GM12878 (cell line): ENCODE measurements at regions of chr4 and their contacts with region 1.

Region 1: GRCh38 chr4:30461218-30461617 is 259.0 kb upstream of the PCDH7 start:
- DNase-seq: peak; percentile 19
- ATAC-seq: peak; percentile 90
- H3K4me3 ChIP-seq: no peak overlapping the region
- H3K27ac ChIP-seq: peak overlapping the region; percentile 66
- H3K4me1 ChIP-seq: peaks cover 16% of the 10 kb centered on the region
- H3K27me3 ChIP-seq: no peaks in the 10 kb centered on the region
- CTCF ChIP-seq: no peak
- EP300 ChIP-seq: peak in 1 of 2 experiments; percentile 44; a peak in 1 of 4 replicates
- POLR2A ChIP-seq: no peak
- RAD21 ChIP-seq: peak; percentile 42; the same call in 1 of the 2 replicates

Region 2: DNA sequence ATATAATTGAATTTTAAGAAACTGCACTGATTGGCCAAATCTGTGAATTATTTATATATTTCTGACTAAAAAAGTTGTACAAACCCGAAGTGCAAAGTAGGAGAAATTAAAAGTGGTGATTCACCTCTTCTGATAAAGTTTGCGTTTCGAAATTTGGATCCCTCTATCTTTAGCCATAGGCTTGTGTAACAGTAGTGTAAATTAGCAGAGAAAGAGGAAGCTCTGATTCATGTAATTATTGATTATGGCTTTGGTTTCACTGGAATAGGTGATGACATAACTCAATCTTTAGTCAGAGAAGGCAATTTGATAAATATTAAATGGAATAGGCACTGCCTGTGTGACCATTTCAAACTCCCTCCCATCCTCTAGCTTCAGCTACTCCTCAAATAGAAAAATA is 458.9 kb before region 1 on chr4:
- CTCF ChIA-PET with region 1: no interaction called
- POLR2A ChIA-PET with region 1: no interaction called
- RAD21 ChIA-PET with region 1: no interaction called
- SMC1A ChIA-PET with region 1: no interaction called
- in situ Hi-C with region 1: no loop called
- intact Hi-C with region 1: no loop called
- DNase-seq: no peak
- ATAC-seq: no peak
- H3K4me3 ChIP-seq: no peak overlapping the region
- H3K27ac ChIP-seq: no peak overlapping the region
- H3K4me1 ChIP-seq: no peaks in the 10 kb centered on the region
- H3K27me3 ChIP-seq: no peaks in the 10 kb centered on the region
- CTCF ChIP-seq: no peak
- EP300 ChIP-seq: no peak
- POLR2A ChIP-seq: no peak
- RAD21 ChIP-seq: no peak

Region 3: GRCh38 chr4:30413915-30414314 is 47.3 kb before region 1 on chr4:
- CTCF ChIA-PET with region 1: no interaction called
- POLR2A ChIA-PET with region 1: no interaction called
- RAD21 ChIA-PET with region 1: no interaction called
- SMC1A ChIA-PET with region 1: no interaction called
- in situ Hi-C with region 1: no loop called
- intact Hi-C with region 1: no loop called
- DNase-seq: no peak
- ATAC-seq: no peak
- H3K4me3 ChIP-seq: no peak overlapping the region
- H3K27ac ChIP-seq: no peak overlapping the region
- H3K4me1 ChIP-seq: no peaks in the 10 kb centered on the region
- H3K27me3 ChIP-seq: no peaks in the 10 kb centered on the region
- CTCF ChIP-seq: no peak
- EP300 ChIP-seq: no peak
- POLR2A ChIP-seq: no peak
- RAD21 ChIP-seq: no peak

Region 4: DNA sequence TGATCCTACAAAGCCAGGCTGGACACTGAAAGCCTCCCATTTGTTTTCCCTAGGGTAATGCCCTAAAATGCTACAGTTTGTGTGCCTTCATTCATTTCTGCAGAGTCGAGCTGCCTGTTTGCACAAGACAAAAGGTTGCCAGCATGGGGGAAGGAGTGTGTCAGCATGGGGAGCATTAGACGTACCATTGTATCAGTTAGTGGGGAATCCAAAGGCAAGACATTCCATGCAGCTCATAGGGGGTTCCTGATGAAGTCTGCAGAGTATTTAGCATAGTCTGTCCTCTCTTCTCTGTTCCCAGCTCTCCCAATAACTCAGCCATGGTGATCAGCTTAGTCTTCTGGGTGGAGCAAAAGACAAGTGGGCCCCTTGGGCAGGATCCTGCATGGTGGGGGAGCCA is 17.9 kb before region 1 on chr4:
- CTCF ChIA-PET with region 1: interaction called, 5 read pairs
- POLR2A ChIA-PET with region 1: no interaction called
- RAD21 ChIA-PET with region 1: no interaction called
- SMC1A ChIA-PET with region 1: interaction called, 10 read pairs
- in situ Hi-C with region 1: no loop called
- intact Hi-C with region 1: no loop called
- DNase-seq: no peak
- ATAC-seq: no peak
- H3K4me3 ChIP-seq: no peak overlapping the region
- H3K27ac ChIP-seq: no peak overlapping the region
- H3K4me1 ChIP-seq: no peaks in the 10 kb centered on the region
- H3K27me3 ChIP-seq: no peaks in the 10 kb centered on the region
- CTCF ChIP-seq: no peak
- EP300 ChIP-seq: no peak
- POLR2A ChIP-seq: no peak
- RAD21 ChIP-seq: no peak

Region 5: GRCh38 chr4:30511751-30512150 is 50.5 kb after region 1 on chr4:
- CTCF ChIA-PET with region 1: no interaction called
- POLR2A ChIA-PET with region 1: no interaction called
- RAD21 ChIA-PET with region 1: no interaction called
- SMC1A ChIA-PET with region 1: no interaction called
- in situ Hi-C with region 1: no loop called
- intact Hi-C with region 1: no loop called
- DNase-seq: no peak
- ATAC-seq: no peak
- H3K4me3 ChIP-seq: no peak overlapping the region
- H3K27ac ChIP-seq: no peak overlapping the region
- H3K4me1 ChIP-seq: no peaks in the 10 kb centered on the region
- H3K27me3 ChIP-seq: no peaks in the 10 kb centered on the region
- CTCF ChIP-seq: no peak
- EP300 ChIP-seq: no peak
- POLR2A ChIP-seq: no peak
- RAD21 ChIP-seq: no peak